ENCODE measurements at regions of chr10 and their contacts with region 1.

Region 1: DNA sequence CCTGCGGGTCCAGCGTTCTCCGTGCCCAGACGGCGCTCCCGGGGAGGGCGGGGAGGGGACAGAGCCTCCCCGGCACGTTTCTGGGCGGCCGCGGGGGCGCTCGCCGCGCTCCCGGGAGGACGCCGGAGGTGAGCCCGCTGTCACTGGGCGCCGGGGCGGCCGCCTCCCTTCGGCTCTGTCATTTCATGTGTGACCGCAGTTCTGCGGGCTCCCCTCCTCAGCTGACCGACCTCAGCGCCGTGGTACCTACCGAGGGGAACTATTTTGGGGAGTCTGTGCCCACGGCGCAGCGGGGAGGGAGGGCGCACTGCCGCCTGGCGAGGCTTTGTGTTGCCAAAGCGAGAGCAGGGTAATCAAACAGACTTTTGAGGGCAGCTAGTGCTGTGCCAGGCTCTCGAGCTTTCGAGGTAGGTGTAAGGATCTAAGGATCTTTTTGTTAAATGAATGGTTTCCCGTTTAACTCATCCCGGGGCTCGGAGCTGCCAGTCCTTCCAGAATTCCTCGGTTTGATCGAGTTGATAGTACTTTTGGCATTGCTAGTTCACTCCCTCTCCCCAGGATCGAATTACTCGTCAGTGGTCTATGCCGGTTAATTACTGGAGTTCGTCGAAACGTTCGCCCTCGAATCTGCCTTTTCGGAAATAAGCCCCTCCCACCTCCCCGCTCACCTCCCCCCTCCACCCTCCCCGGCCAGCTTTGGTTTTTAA is 1.9 kb downstream of the ARID5B start:
- DNase-seq: peak; percentile 66
- H3K4me3 ChIP-seq: peak overlapping the region; percentile 98
- H3K27ac ChIP-seq: peak overlapping the region; percentile 38
- H3K4me1 ChIP-seq: peaks cover 23% of the 10 kb centered on the region
- H3K27me3 ChIP-seq: no peaks in the 10 kb centered on the region

Region 2: DNA sequence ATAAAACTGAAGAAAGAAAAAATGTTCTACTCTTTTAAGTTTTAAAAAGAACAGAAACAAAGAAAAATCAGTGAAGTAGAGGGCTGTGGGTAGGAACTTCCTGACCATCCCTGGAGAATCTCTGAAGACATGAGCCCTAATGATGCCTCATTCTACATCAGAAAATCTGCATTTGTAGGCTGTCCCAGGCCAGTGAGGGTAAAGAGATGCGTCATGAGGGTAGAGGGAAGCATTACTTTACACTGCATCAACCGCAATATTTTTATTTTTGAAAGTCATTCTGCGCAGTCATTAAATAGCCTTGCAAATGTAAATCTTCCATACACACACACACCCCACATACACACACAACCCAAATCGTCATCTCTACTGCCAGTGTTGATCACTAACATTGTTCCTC is 322.8 kb before region 1 on chr10:
- in situ Hi-C with region 1: no loop called
- DNase-seq: no peak
- H3K4me3 ChIP-seq: no peak overlapping the region
- H3K27ac ChIP-seq: no peak overlapping the region
- H3K4me1 ChIP-seq: no peaks in the 10 kb centered on the region
- H3K27me3 ChIP-seq: no peaks in the 10 kb centered on the region

Region 3: GRCh38 chr10:62048919-62049623 is 145.7 kb after region 1 on chr10:
- in situ Hi-C with region 1: loop called (anchors 10 kb)
- DNase-seq: peak; percentile 100
- H3K4me3 ChIP-seq: peak overlapping the region; percentile 94
- H3K27ac ChIP-seq: peak overlapping the region; percentile 91
- H3K4me1 ChIP-seq: peaks cover 77% of the 10 kb centered on the region
- H3K27me3 ChIP-seq: no peaks in the 10 kb centered on the region

Region 4: DNA sequence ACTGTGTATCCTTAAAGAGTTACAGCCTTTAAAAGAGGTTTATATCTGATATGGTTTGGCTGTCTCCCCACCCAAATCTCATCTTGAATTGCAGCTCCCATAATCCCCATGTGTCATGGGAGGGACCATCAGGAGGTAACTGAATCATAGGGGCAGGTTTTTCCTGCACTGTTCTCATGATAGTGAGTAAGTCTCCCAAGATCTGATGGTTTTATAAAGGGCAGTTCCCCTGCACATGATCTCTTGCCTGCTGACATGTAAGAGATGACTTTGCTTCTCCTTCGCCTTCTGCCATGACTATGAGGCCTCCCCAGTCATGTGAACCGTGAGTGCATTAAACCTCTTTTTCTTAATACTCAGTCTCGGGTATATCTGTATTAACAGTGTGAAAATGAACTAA is 355.6 kb after region 1 on chr10:
- in situ Hi-C with region 1: no loop called
- DNase-seq: no peak
- H3K4me3 ChIP-seq: no peak overlapping the region
- H3K27ac ChIP-seq: no peak overlapping the region
- H3K4me1 ChIP-seq: peaks cover 9% of the 10 kb centered on the region
- H3K27me3 ChIP-seq: no peaks in the 10 kb centered on the region

Measured in GM23248 (cell line).